ENCODE measurements at regions of chr7 and their contacts with region 1.

Region 1: DNA sequence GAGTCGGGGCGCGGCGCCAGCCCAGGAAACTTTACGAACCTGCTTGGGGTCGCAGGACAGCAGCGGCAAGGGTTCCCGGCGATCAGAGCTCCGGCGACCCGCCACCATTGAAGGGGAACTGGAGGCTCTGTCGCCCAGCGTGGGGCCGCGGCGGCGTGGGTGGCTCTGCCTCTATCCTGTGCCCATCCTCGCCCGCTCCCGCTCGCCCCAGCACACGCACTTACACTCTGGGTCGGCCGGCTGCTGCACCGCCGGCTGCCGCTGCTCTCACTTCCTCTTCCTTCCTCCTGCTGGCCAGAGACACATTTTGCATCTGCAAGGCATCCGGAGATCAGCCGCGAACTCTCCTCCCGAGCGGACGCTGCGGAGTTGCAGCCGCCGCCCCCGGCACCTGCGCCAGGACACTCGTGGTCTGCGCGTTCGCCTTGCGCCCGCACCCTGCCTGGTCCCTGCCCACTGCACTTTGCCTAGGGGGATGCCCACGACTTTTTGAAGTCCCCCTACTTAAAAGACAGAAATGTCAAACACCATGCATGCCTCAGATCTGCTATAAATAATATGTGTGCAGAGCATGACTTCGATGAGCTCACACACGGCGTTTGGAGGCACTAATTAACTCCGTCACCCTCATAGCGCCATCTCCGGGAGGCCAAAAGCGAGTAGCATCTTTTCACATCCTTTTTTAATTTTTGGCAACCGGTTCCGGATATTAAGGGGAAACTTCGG is at the start of gene ELMO1:
- DNase-seq: peak; percentile 88
- ATAC-seq: peak; percentile 81
- H3K4me3 Mint-ChIP-seq: peak within 1 kb of the TSS; percentile 81
- H3K27ac Mint-ChIP-seq: peak within 1 kb of the TSS; percentile 98
- H3K4me1 Mint-ChIP-seq: peaks cover 51% of the 10 kb centered on the region
- H3K27me3 Mint-ChIP-seq: no peaks in the 10 kb centered on the region
- total RNA-seq, gene ELMO1: 96.2 to 173 TPM

Region 2: GRCh38 chr7:37208528-37208927 is 240.3 kb before region 1 on chr7:
- CTCF ChIA-PET with region 1: no interaction called
- POLR2A ChIA-PET with region 1: no interaction called
- intact Hi-C with region 1: loop called in 1 of 2 experiments (anchors 2 kb)
- DNase-seq: peak; percentile 34
- ATAC-seq: no peak
- H3K4me3 Mint-ChIP-seq: no peak overlapping the region
- H3K27ac Mint-ChIP-seq: peak overlapping the region; percentile 26
- H3K4me1 Mint-ChIP-seq: peaks cover 16% of the 10 kb centered on the region
- H3K27me3 Mint-ChIP-seq: no peaks in the 10 kb centered on the region

Region 3: DNA sequence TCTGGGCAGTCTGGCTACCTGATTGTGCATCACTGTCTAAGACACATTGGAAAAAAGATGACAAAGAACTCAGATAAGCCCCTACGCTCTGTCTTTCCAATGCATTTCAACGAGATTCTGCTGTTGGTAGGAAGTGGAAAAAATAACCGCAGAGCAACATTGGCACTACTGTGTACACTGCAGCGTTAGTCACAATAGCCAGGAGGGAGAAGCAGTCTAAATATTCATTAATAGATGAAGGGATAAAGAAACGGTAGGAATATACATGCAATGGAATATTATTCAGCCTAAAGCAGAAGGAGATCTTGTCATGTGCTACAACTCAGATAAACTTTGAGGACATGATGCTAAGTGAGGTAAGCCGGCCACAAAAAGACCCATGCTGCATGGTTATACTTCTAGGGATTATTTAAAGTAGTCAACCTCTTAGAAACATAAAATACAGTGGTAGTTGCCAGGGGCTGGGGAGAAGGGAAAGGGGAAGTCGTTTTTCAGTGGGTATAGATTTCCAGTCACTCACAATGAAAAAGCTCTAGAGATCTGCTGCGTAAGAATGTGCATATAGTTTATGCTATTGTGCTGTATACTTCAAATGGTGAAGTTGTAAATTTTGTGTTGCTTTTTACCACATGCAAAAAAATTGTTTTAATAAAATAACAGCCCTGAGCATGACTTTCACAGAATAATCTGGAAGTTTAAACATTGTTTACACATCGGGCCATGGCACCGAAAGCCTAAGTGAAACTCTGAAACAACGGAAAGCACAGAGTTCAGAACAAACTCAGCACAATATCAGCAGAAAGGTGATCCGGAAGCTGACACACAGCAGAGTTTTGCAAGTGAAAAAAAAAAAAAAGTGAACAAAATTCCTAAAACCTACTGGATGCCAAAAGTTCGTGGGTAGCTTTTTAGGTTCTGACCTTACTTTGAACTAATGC is 40.2 kb before region 1 on chr7:
- CTCF ChIA-PET with region 1: interaction called, 4 read pairs
- POLR2A ChIA-PET with region 1: no interaction called
- intact Hi-C with region 1: loop called in 1 of 2 experiments (anchors 1 kb)
- DNase-seq: peak; percentile 49
- ATAC-seq: peak; percentile 55
- H3K4me3 Mint-ChIP-seq: peak overlapping the region; percentile 71
- H3K27ac Mint-ChIP-seq: peak overlapping the region; percentile 94
- H3K4me1 Mint-ChIP-seq: peaks cover 81% of the 10 kb centered on the region
- H3K27me3 Mint-ChIP-seq: no peaks in the 10 kb centered on the region

Region 4: GRCh38 chr7:37424995-37425394 is 23.8 kb before region 1 on chr7:
- CTCF ChIA-PET with region 1: no interaction called
- POLR2A ChIA-PET with region 1: no interaction called
- intact Hi-C with region 1: no loop called
- DNase-seq: no peak
- ATAC-seq: peak; percentile 30
- H3K4me3 Mint-ChIP-seq: no peak overlapping the region
- H3K27ac Mint-ChIP-seq: no peak overlapping the region
- H3K4me1 Mint-ChIP-seq: peaks cover 68% of the 10 kb centered on the region
- H3K27me3 Mint-ChIP-seq: no peaks in the 10 kb centered on the region

Region 5: GRCh38 chr7:37435156-37435855 is 13.5 kb before region 1 on chr7:
- CTCF ChIA-PET with region 1: interaction called, 15 read pairs
- POLR2A ChIA-PET with region 1: no interaction called
- intact Hi-C with region 1: loop called in 1 of 2 experiments (anchors 1 kb)
- DNase-seq: no peak
- ATAC-seq: no peak
- H3K4me3 Mint-ChIP-seq: no peak overlapping the region
- H3K27ac Mint-ChIP-seq: peak overlapping the region; percentile 34
- H3K4me1 Mint-ChIP-seq: peaks cover 88% of the 10 kb centered on the region
- H3K27me3 Mint-ChIP-seq: no peaks in the 10 kb centered on the region

Region 6: DNA sequence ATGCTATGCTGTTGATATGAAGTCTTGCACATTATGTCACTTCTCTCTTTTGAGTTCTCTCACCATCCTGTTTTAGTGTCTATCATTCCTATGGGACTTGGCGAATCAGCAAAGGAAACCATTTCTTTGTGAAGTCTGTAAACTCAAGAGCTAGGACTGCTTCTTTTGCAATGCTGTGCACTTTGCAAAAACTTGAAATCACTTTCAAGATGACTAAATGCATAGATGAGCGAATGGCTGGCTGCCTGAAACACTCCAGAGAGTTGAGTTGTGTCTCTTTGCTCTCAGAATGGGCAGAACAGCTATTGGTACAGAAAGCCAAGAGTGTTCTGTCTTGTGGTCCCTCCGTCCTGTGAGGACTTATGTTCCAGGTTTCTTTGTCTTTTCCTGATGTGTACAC is 18.2 kb after region 1 on chr7:
- CTCF ChIA-PET with region 1: no interaction called
- POLR2A ChIA-PET with region 1: no interaction called
- intact Hi-C with region 1: no loop called
- DNase-seq: peak; percentile 27
- ATAC-seq: peak; percentile 86
- H3K4me3 Mint-ChIP-seq: no peak overlapping the region
- H3K27ac Mint-ChIP-seq: no peak overlapping the region
- H3K4me1 Mint-ChIP-seq: peaks cover 11% of the 10 kb centered on the region
- H3K27me3 Mint-ChIP-seq: peaks cover 2% of the 10 kb centered on the region

Region 7: DNA sequence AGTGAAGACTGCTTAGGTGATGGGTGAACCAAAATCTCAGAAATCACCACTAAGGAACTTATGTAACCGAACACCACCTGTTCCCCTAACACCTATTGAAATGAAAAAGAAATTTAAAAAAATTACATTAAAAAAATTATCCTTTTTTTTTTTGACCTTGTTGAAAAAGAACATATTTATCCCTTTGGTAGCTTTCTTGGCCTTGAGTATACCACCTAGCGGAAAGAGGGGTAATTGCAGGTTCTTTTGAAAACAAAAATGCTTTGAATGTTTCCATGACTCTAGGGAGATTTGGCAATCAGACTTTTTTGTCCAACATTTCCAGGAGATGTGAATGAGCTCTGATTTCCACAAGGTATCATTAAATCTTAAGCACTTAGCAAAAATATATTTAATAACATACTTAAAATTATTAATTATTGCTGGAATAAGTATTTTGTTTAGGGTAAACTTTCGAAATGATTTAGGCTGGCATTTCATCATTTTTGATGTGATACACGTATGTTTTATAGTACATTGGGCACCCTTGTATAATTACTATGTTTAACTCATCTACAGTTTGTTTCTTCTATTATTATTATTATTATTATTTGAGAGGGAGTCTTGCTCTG is 46.9 kb after region 1 on chr7:
- CTCF ChIA-PET with region 1: interaction called, 10 read pairs
- POLR2A ChIA-PET with region 1: interaction called, 5 read pairs
- intact Hi-C with region 1: loop called (anchors 2 to 5 kb)
- DNase-seq: no peak
- ATAC-seq: no peak
- H3K4me3 Mint-ChIP-seq: no peak overlapping the region
- H3K27ac Mint-ChIP-seq: no peak overlapping the region
- H3K4me1 Mint-ChIP-seq: peaks cover 8% of the 10 kb centered on the region
- H3K27me3 Mint-ChIP-seq: no peaks in the 10 kb centered on the region

Region 8: DNA sequence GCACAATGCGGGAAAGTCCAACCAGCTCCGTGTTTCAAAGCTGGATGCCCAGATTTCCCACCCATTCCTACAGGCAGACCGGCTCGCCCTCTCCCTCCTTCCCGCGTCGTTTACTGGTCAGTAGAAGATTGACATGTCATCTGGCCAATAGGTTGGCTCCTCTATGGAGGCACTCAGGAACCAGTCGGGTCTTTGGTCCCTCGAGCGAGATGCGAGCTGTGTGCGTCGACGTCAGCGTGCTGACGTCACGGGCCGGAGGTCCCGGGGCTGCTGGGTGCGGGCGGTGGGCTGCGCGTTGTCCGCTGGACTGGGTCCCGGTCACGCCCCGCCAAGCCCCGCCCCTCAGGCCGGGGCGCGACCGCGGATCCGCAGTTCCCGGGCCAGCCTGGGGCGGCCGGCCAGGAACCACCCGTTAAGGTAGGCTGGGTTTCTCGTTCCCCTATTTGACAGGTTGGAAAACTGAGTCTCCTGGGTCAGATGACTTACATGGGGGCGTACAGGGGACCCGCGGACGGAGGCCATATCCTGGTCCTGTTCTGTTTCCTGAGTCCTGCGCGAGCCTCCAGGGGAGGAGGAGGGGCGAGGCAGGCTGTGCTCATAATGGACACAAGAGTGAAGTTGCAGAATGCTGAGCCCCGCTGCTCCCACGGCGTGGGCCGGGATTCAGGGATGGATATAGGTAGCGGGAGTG is 729.4 kb after region 1 on chr7 and contains the start of gene STARD3NL:
- CTCF ChIA-PET with region 1: no interaction called
- POLR2A ChIA-PET with region 1: no interaction called
- intact Hi-C with region 1: loop called in 1 of 2 experiments (anchors 10 kb)
- DNase-seq: peak; percentile 92
- ATAC-seq: peak; percentile 100
- H3K4me3 Mint-ChIP-seq: peak within 1 kb of the TSS; percentile 95
- H3K27ac Mint-ChIP-seq: peak within 1 kb of the TSS; percentile 93
- H3K4me1 Mint-ChIP-seq: peaks cover 37% of the 10 kb centered on the region
- H3K27me3 Mint-ChIP-seq: peaks cover 10% of the 10 kb centered on the region
- total RNA-seq, gene STARD3NL: 27.9 to 30.8 TPM